Caco-2 (cell line): ENCODE measurements at regions of chr2 and their contacts with region 1.

Region 1: GRCh38 chr2:199979832-199980628 is 24.6 kb downstream of the MAIP1 start:
- DNase-seq: peak; percentile 76 to 83
- H3K4me3 ChIP-seq: no peak overlapping the region
- H3K4me3 Mint-ChIP-seq: peak overlapping the region; percentile 9
- H3K27ac Mint-ChIP-seq: no peak overlapping the region
- H3K4me1 ChIP-seq: peaks cover 20% of the 10 kb centered on the region
- H3K4me1 Mint-ChIP-seq: peaks cover 20% of the 10 kb centered on the region
- H3K27me3 ChIP-seq: no peaks in the 10 kb centered on the region
- H3K27me3 Mint-ChIP-seq: no peaks in the 10 kb centered on the region
- CTCF ChIP-seq: peak; percentile 74 to 87

Region 2: DNA sequence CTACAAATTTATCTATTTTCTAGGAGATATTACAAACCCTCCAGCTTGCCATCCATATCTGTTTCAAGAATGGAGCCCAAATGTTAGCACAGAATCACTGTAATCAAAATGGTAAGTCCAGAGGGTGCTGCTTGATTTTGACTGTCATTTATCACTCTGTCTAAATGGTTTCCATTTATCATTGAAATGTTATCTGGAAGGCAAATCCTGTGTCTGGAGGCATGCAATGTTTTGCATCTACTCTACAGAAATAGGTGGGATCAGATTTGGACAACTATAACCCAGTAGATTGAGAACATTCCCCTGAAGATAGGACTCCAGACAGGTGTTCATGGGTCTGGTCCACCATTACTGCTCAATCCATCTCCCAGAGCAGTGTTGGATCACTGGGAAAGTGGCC is 104.0 kb after region 1 on chr2:
- CTCF ChIA-PET with region 1: no interaction called
- POLR2A ChIA-PET with region 1: no interaction called
- intact Hi-C with region 1: no loop called
- DNase-seq: no peak
- H3K4me3 ChIP-seq: no peak overlapping the region
- H3K4me3 Mint-ChIP-seq: no peak overlapping the region
- H3K27ac Mint-ChIP-seq: no peak overlapping the region
- H3K4me1 ChIP-seq: peaks cover 21% of the 10 kb centered on the region
- H3K4me1 Mint-ChIP-seq: peaks cover 12% of the 10 kb centered on the region
- H3K27me3 ChIP-seq: no peaks in the 10 kb centered on the region
- H3K27me3 Mint-ChIP-seq: no peaks in the 10 kb centered on the region
- CTCF ChIP-seq: no peak

Region 3: GRCh38 chr2:200259577-200260008 is 279.6 kb after region 1 on chr2:
- CTCF ChIA-PET with region 1: no interaction called
- POLR2A ChIA-PET with region 1: no interaction called
- intact Hi-C with region 1: loop called (anchors 5 kb)
- DNase-seq: peak in 1 of 2 experiments; percentile 67
- H3K4me3 ChIP-seq: no peak overlapping the region
- H3K4me3 Mint-ChIP-seq: peak overlapping the region; percentile 49
- H3K27ac Mint-ChIP-seq: peak overlapping the region; percentile 17
- H3K4me1 ChIP-seq: peaks cover 39% of the 10 kb centered on the region
- H3K4me1 Mint-ChIP-seq: peaks cover 24% of the 10 kb centered on the region
- H3K27me3 ChIP-seq: no peaks in the 10 kb centered on the region
- H3K27me3 Mint-ChIP-seq: no peaks in the 10 kb centered on the region
- CTCF ChIP-seq: no peak

Region 4: DNA sequence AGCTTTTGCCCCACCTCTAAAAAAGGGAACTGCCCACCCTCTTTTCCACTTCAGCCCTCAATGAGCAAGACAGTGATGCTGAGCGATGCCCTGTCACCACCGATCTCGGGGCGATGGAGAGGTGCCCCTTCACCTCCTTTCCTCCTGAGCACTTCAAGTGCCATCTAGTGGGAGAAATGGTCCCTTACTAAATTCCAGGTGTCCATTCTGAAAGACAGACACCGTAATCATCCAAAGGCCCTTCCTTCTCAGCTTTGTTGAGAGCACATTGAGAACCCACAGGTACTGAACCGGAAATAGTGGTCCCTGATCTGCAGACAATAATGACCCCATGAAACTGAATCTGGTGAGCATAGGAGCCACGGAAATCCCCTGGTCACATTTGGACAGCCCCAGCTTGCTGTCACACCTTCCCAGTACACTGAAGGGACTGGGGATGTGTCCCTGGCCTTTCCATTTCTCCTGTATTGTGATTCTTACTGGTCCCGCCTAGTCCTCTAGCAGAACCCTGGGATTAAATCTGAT is 491.4 kb after region 1 on chr2:
- CTCF ChIA-PET with region 1: interaction called, 3 read pairs
- POLR2A ChIA-PET with region 1: no interaction called
- intact Hi-C with region 1: loop called (anchors 1 kb)
- DNase-seq: peak in 1 of 2 experiments; percentile 36
- H3K4me3 ChIP-seq: no peak overlapping the region
- H3K4me3 Mint-ChIP-seq: no peak overlapping the region
- H3K27ac Mint-ChIP-seq: no peak overlapping the region
- H3K4me1 ChIP-seq: no peaks in the 10 kb centered on the region
- H3K4me1 Mint-ChIP-seq: no peaks in the 10 kb centered on the region
- H3K27me3 ChIP-seq: no peaks in the 10 kb centered on the region
- H3K27me3 Mint-ChIP-seq: no peaks in the 10 kb centered on the region
- CTCF ChIP-seq: peak in 1 of 2 experiments; percentile 49